Psoas muscle (tissue), 8 donors: ENCODE measurements at regions of chr2 and their contacts with region 1.

Region 1: GRCh38 chr2:86298411-86299379 is 38.7 kb downstream of the REEP1 start:
- DNase-seq: no peak
- ATAC-seq: peak; percentile 42 to 82 (median 70)
- H3K4me3 ChIP-seq: no peak overlapping the region
- H3K27ac ChIP-seq: peak overlapping the region; percentile 24
- H3K4me1 ChIP-seq: peaks cover 51% of the 10 kb centered on the region
- H3K27me3 ChIP-seq: no peaks in the 10 kb centered on the region
- CTCF ChIP-seq: peak; percentile 34

Region 2: DNA sequence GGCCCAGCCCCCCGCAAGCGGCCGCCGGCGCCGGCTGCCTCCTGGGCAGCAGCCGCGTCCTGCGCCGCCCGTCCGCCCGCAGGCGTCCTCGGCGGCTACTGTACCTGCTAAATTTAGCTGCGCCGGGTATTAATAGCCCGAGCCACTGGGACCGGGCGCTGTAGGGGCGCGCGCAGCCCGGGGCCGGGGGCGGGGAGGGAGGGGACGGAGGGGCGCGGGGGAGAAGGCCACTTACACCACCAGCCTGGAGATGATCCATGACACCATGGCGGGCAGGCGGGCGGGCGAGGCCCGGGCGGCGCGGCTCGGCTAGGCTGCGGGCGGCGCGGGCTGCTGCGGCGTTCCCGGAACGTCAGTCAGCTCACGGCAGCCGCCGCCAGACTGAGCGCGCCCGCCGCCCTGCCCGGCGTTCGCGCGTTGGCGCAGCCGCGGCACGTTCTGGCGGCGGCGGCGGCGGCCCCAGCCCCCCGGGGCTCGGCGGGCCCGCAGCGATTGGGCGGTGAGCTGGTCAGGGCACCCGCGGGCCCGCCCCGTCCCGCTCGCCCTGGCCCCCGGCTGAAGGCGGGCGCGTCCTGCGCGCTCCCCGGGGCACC is 38.6 kb after region 1 on chr2 and contains the start of gene REEP1:
- intact Hi-C with region 1: loop called in 1 of 2 experiments (anchors 5 kb)
- DNase-seq: peak; percentile 48 to 72
- ATAC-seq: peak; percentile 90 to 93 (median 92)
- H3K4me3 ChIP-seq: peak within 1 kb of the TSS; percentile 85
- H3K27ac ChIP-seq: peak within 1 kb of the TSS; percentile 88
- H3K4me1 ChIP-seq: peaks cover 16% of the 10 kb centered on the region
- H3K27me3 ChIP-seq: no peaks in the 10 kb centered on the region
- CTCF ChIP-seq: no peak
- total RNA-seq, gene REEP1: 4.1 to 16.1 (median 9.7) TPM